ENCODE measurements at regions of chr6 and their contacts with region 1.

Region 1: GRCh38 chr6:18264219-18264922 is at the start of gene DEK:
- DNase-seq: peak; percentile 69 to 91 (median 80)
- ATAC-seq: peak; percentile 68
- H3K4me3 ChIP-seq: peak within 1 kb of the TSS; percentile 91
- H3K4me3 Mint-ChIP-seq: peak within 1 kb of the TSS; percentile 98
- H3K27ac ChIP-seq: peak within 1 kb of the TSS; percentile 85 to 91
- H3K27ac Mint-ChIP-seq: peak within 1 kb of the TSS; percentile 98
- H3K4me1 ChIP-seq: peaks cover 37% of the 10 kb centered on the region
- H3K4me1 Mint-ChIP-seq: peaks cover 53% of the 10 kb centered on the region
- H3K27me3 ChIP-seq: no peaks in the 10 kb centered on the region
- H3K27me3 Mint-ChIP-seq: no peaks in the 10 kb centered on the region
- CTCF ChIP-seq: peak; percentile 63
- total RNA-seq, gene DEK: 52.7 to 56.7 TPM

Region 2: DNA sequence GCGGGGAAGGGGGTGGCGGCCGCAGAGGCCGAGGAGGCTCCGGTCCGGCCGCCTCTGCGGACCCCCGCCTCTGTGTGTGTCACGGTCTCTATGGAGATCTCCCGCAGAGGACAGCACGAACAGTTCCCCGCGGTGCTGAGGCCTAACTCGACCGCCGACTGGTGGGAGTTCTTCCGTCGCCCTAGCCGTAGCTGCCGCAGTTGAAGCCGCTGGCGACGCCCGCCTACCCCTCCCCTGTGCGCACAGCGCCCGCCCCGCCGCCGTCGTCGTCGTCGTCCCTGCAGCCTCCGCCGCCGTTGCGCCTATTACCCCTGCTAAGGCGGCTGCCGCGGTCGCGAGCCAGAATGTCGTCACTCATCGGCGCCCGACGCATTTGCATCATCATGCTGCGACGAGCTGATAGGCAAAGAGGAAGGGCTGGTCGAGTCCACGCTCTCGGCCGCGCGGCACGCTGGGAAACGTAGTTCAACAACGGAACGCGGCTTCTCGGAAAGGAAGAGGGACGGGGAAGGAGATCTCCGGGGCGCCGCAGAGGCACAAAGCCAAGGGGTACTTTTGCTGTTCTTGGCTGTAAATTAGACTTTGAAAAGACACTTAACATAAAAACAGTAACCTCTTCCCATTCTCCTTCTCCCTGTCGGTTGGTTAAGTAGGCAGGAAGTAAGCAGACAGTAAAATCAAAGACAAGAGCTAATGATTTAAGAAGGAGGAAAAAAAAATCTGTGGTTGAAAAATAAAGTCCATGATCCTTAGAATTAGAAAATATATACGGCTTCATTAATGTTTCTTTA is 557.6 kb before region 1 on chr6 and contains the start of gene NUP153:
- CTCF ChIA-PET with region 1: no interaction called
- POLR2A ChIA-PET with region 1: interaction called, 3 read pairs
- intact Hi-C with region 1: loop called in 1 of 2 experiments (anchors 5 kb)
- DNase-seq: peak; percentile 98 to 100 (median 100)
- ATAC-seq: peak; percentile 79
- H3K4me3 ChIP-seq: peak within 1 kb of the TSS; percentile 82
- H3K4me3 Mint-ChIP-seq: peak within 1 kb of the TSS; percentile 95
- H3K27ac ChIP-seq: peak within 1 kb of the TSS; percentile 98 to 99
- H3K27ac Mint-ChIP-seq: peak within 1 kb of the TSS; percentile 93
- H3K4me1 ChIP-seq: peaks cover 41% of the 10 kb centered on the region
- H3K4me1 Mint-ChIP-seq: peaks cover 48% of the 10 kb centered on the region
- H3K27me3 ChIP-seq: no peaks in the 10 kb centered on the region
- H3K27me3 Mint-ChIP-seq: no peaks in the 10 kb centered on the region
- CTCF ChIP-seq: no peak
- total RNA-seq, gene NUP153: 58.3 to 61.0 TPM

Region 3: GRCh38 chr6:18387061-18387721 is 122.8 kb after region 1 on chr6 and contains the start of gene RNF144B:
- CTCF ChIA-PET with region 1: no interaction called
- POLR2A ChIA-PET with region 1: interaction called, 10 read pairs
- intact Hi-C with region 1: no loop called
- DNase-seq: peak; percentile 35 to 82 (median 65)
- ATAC-seq: peak; percentile 94
- H3K4me3 ChIP-seq: peak within 1 kb of the TSS; percentile 70
- H3K4me3 Mint-ChIP-seq: peak within 1 kb of the TSS; percentile 99
- H3K27ac ChIP-seq: peak within 1 kb of the TSS in 1 of 2 donors; percentile 51
- H3K27ac Mint-ChIP-seq: peak within 1 kb of the TSS; percentile 73
- H3K4me1 ChIP-seq: peaks cover 10% of the 10 kb centered on the region
- H3K4me1 Mint-ChIP-seq: peaks cover 34% of the 10 kb centered on the region
- H3K27me3 ChIP-seq: no peaks in the 10 kb centered on the region
- H3K27me3 Mint-ChIP-seq: no peaks in the 10 kb centered on the region
- CTCF ChIP-seq: no peak
- total RNA-seq, gene RNF144B: 2.3 to 3.5 TPM

Region 4: DNA sequence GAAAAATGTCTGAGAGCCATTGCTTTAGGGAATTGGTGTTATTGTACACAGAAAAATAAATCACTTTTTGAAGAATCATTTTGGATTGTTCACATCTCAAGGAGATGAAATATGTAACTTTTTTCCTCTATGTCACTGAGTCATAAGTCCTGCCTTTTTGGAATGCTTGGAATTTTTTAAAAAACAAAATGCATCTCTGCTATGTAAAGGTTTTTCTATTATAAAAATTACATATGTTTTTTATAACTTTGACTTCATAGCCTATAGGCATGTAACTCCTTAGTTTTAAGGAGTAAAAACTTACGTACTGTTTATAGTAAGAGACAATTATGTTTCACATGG is 131.5 kb after region 1 on chr6:
- CTCF ChIA-PET with region 1: no interaction called
- POLR2A ChIA-PET with region 1: no interaction called
- intact Hi-C with region 1: loop called in 1 of 2 experiments (anchors 5 kb)
- DNase-seq: no peak
- ATAC-seq: no peak
- H3K4me3 ChIP-seq: no peak overlapping the region
- H3K4me3 Mint-ChIP-seq: no peak overlapping the region
- H3K27ac ChIP-seq: no peak overlapping the region
- H3K27ac Mint-ChIP-seq: no peak overlapping the region
- H3K4me1 ChIP-seq: peaks cover 3% of the 10 kb centered on the region
- H3K4me1 Mint-ChIP-seq: peaks cover 10% of the 10 kb centered on the region
- H3K27me3 ChIP-seq: no peaks in the 10 kb centered on the region
- H3K27me3 Mint-ChIP-seq: no peaks in the 10 kb centered on the region
- CTCF ChIP-seq: no peak

Region 5: GRCh38 chr6:18861204-18861603 is 596.8 kb after region 1 on chr6:
- CTCF ChIA-PET with region 1: no interaction called
- POLR2A ChIA-PET with region 1: no interaction called
- intact Hi-C with region 1: no loop called
- DNase-seq: no peak
- ATAC-seq: no peak
- H3K4me3 ChIP-seq: no peak overlapping the region
- H3K4me3 Mint-ChIP-seq: no peak overlapping the region
- H3K27ac ChIP-seq: no peak overlapping the region
- H3K27ac Mint-ChIP-seq: no peak overlapping the region
- H3K4me1 ChIP-seq: no peaks in the 10 kb centered on the region
- H3K4me1 Mint-ChIP-seq: no peaks in the 10 kb centered on the region
- H3K27me3 ChIP-seq: no peaks in the 10 kb centered on the region
- H3K27me3 Mint-ChIP-seq: no peaks in the 10 kb centered on the region
- CTCF ChIP-seq: no peak

Region 6: GRCh38 chr6:20212392-20213217 is 1948.2 kb after region 1 on chr6 and contains the start of gene MBOAT1:
- CTCF ChIA-PET with region 1: no interaction called
- POLR2A ChIA-PET with region 1: no interaction called
- intact Hi-C with region 1: loop called in 1 of 2 experiments (anchors 5 kb)
- DNase-seq: peak; percentile 27 to 86 (median 56)
- ATAC-seq: peak; percentile 78
- H3K4me3 ChIP-seq: peak within 1 kb of the TSS; percentile 83
- H3K4me3 Mint-ChIP-seq: peak within 1 kb of the TSS; percentile 99
- H3K27ac ChIP-seq: peak within 1 kb of the TSS; percentile 61 to 78
- H3K27ac Mint-ChIP-seq: peak within 1 kb of the TSS; percentile 97
- H3K4me1 ChIP-seq: peaks cover 28% of the 10 kb centered on the region
- H3K4me1 Mint-ChIP-seq: peaks cover 48% of the 10 kb centered on the region
- H3K27me3 ChIP-seq: no peaks in the 10 kb centered on the region
- H3K27me3 Mint-ChIP-seq: no peaks in the 10 kb centered on the region
- CTCF ChIP-seq: no peak
- total RNA-seq, gene MBOAT1: 17.2 to 18.5 TPM